ENCODE measurements at regions of chr13 and their contacts with region 1.

Region 1: DNA sequence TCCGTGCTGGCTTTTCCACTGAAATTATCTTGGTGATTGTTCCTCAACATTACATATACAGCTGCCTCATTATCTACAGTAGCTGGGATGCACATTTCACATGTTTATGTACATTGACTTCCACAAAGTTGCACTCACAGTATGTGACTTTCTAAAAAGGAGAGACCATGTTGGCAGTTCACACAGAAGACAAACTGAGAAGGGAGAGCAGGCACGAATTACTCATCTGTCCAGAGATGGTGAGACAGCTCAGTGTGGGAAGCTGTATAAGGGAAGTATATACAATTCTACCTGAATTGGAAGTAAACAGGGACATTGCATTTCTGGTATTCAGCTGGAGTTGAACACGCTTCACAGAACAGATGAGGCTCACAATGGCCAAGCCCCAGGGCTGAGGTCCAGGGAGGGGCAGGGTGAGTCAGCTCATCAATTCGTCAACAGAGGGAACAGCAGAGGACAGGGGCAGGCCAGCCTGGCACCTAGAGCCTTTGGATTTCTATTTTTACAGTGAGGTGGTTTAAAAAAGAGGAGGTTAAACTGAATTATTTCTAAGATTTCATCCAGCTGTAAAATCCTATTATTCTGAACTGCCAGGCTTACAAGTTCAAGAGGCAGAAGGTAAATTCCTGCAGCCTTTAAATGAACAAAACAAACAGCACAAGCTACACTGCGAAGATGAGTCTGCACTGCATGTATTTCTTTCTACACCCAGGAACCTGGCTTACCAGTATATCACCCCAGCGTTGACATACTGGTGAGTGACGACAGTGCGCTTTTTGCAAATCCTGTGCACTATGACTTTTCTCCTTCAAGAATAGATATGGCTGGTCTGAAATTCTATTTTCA is 9.8 kb downstream of the PARP4 start:
- DNase-seq: peak; percentile 86
- H3K4me3 ChIP-seq: no peak overlapping the region
- H3K27ac ChIP-seq: peak overlapping the region; percentile 82
- H3K4me1 ChIP-seq: peaks cover 36% of the 10 kb centered on the region
- H3K27me3 ChIP-seq: no peaks in the 10 kb centered on the region
- CTCF ChIP-seq: no peak

Region 2: DNA sequence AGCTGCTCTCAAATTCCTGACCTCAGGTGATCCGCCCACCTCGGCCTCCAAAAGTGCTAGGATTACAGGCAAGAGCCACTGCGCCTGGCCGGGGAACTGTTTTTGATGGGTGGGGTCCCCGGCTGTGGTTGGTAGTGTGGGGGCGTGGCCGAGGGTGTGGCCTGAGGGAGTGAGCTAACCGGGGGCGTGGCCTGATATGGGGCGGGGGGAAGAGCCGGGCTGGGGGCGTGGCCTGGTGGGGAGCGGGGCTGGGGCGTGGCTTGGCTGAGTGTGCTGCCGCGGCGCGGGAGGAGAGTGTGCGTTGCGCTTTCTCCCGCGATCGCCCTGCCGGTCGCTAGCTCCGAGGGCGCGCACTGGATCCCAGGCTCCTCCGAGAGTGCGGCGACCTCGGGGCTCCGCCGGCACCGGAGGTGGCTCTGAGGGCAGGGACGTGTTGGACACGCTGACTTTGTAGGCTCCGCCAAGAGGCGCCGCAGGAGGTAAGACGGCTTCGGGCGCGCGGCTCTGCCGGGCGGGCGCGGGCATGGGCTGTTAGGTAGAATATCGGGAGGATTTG is 342.2 kb before region 1 on chr13 and contains the start of gene SPATA13:
- CTCF ChIA-PET with region 1: no interaction called
- dilution Hi-C with region 1: no loop called
- in situ Hi-C with region 1: no loop called
- intact Hi-C with region 1: no loop called
- DNase-seq: peak; percentile 70
- H3K4me3 ChIP-seq: peak within 1 kb of the TSS; percentile 46 to 64 (median 59)
- H3K27ac ChIP-seq: no peak within 1 kb of the TSS
- H3K4me1 ChIP-seq: peaks cover 7% of the 10 kb centered on the region
- H3K27me3 ChIP-seq: peaks cover 5% of the 10 kb centered on the region
- CTCF ChIP-seq: no peak
- total RNA-seq, gene SPATA13: 0.50 to 0.52 TPM

Region 3: GRCh38 chr13:24341439-24341838 is 161.3 kb before region 1 on chr13:
- CTCF ChIA-PET with region 1: no interaction called
- dilution Hi-C with region 1: no loop called
- in situ Hi-C with region 1: no loop called
- intact Hi-C with region 1: loop called (anchors 5 kb)
- DNase-seq: peak; percentile 38
- H3K4me3 ChIP-seq: no peak overlapping the region
- H3K27ac ChIP-seq: no peak overlapping the region
- H3K4me1 ChIP-seq: peaks cover 8% of the 10 kb centered on the region
- H3K27me3 ChIP-seq: no peaks in the 10 kb centered on the region
- CTCF ChIP-seq: no peak

Region 4: DNA sequence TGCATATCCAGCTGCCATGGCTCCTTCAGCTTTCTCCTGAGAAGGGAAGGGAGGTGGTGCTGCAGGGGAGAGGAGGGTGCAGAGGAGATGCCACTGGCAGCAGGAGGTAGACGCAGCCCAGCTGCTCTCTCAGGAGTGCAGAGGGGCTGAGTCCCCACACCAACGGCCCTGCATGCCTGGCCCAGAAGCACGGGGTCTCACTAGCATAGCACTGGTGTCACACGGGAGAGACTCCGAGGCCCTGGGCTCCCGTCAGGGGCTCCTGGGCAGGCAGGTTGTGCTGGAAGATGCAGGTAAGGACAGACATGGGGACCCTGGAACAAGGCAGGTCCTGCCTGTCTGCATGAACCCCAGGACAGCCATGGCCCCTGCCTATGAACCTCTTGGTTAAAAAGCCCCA is 113.2 kb before region 1 on chr13:
- CTCF ChIA-PET with region 1: no interaction called
- dilution Hi-C with region 1: no loop called
- in situ Hi-C with region 1: no loop called
- intact Hi-C with region 1: no loop called
- DNase-seq: no peak
- H3K4me3 ChIP-seq: no peak overlapping the region
- H3K27ac ChIP-seq: no peak overlapping the region
- H3K4me1 ChIP-seq: no peaks in the 10 kb centered on the region
- H3K27me3 ChIP-seq: no peaks in the 10 kb centered on the region
- CTCF ChIP-seq: no peak

Region 5: GRCh38 chr13:24473686-24474085 is 29.1 kb before region 1 on chr13:
- CTCF ChIA-PET with region 1: no interaction called
- dilution Hi-C with region 1: no loop called
- in situ Hi-C with region 1: no loop called
- intact Hi-C with region 1: no loop called
- DNase-seq: no peak
- H3K4me3 ChIP-seq: no peak overlapping the region
- H3K27ac ChIP-seq: no peak overlapping the region
- H3K4me1 ChIP-seq: no peaks in the 10 kb centered on the region
- H3K27me3 ChIP-seq: no peaks in the 10 kb centered on the region
- CTCF ChIP-seq: no peak

Region 6: DNA sequence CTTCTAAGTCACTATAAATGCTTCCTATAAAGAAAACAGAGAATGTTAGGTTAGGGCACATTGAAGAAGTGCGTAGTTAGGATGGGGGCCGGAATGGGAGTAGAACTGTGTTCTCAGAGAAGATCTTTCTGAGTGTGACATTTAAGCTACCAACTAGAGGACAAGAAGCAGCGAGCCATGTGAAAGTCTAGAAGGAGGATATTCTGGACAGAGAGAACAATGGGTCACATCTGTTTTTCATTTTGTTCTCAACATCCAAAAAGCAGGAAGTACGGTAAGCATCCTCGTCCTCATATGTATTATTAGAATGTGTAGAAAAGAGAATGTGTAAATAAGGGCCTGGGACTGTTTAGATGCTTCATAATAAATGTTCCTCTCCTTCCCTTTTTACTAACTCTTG is 54.3 kb after region 1 on chr13:
- CTCF ChIA-PET with region 1: no interaction called
- dilution Hi-C with region 1: no loop called
- in situ Hi-C with region 1: no loop called
- intact Hi-C with region 1: loop called (anchors 1 kb)
- DNase-seq: no peak
- H3K4me3 ChIP-seq: no peak overlapping the region
- H3K27ac ChIP-seq: no peak overlapping the region
- H3K4me1 ChIP-seq: no peaks in the 10 kb centered on the region
- H3K27me3 ChIP-seq: no peaks in the 10 kb centered on the region
- CTCF ChIP-seq: no peak

Region 7: DNA sequence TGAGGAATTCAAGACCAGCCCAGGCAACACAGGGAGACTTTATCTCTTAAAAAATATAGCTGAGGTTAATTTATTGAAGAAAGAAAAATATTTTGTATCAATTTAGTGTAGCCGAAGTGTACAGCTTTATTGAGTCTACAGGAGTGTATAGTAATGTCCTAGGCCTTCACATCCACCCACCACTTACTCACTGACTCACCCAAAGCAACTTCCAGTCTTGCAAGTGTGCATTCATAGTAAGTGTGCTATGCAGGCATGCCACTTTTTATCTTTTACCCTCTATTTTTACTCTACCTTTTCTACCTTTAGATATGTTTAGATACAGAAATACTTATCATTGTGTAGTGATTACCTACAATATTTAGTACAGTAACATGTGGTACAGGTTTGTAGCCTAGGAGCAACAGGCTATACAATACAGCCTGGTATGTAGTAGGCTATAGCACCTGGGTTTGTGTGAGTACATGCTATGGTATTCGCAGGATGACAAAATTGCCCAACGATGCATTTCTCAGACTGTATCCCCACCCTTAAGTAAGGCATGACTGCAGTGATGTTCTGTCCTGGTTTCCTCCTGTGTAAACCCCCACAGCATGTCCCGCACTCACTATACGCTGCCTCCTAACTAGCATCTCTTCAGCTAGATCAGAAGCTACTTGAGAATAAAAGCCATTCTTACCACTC is 162.1 kb after region 1 on chr13:
- CTCF ChIA-PET with region 1: no interaction called
- dilution Hi-C with region 1: no loop called
- in situ Hi-C with region 1: no loop called
- intact Hi-C with region 1: loop called (anchors 5 kb)
- DNase-seq: peak; percentile 92
- H3K4me3 ChIP-seq: no peak overlapping the region
- H3K27ac ChIP-seq: peak overlapping the region; percentile 97
- H3K4me1 ChIP-seq: peaks cover 40% of the 10 kb centered on the region
- H3K27me3 ChIP-seq: no peaks in the 10 kb centered on the region
- CTCF ChIP-seq: no peak